Activated CD4-positive, alpha-beta T cell treated with anti-CD3 and anti-CD28 coated beads, Interleukin-2, amount 10 ng/mL, durations not matched to agents 24 days and 14 days (primary cell): ENCODE measurements at regions of chr9 and their contacts with region 1.

Region 1: GRCh38 chr9:128296337-128297220 is 20.5 kb downstream of the SWI5 start:
- DNase-seq: no peak
- H3K4me3 Mint-ChIP-seq: no peak overlapping the region
- H3K27ac Mint-ChIP-seq: no peak overlapping the region
- H3K4me1 Mint-ChIP-seq: no peaks in the 10 kb centered on the region
- H3K27me3 Mint-ChIP-seq: no peaks in the 10 kb centered on the region

Region 2: GRCh38 chr9:128361986-128362646 is 65.5 kb after region 1 on chr9:
- intact Hi-C with region 1: loop called (anchors 1 kb)
- DNase-seq: peak; percentile 91
- H3K4me3 Mint-ChIP-seq: peak overlapping the region; percentile 85
- H3K27ac Mint-ChIP-seq: peak overlapping the region; percentile 79
- H3K4me1 Mint-ChIP-seq: peaks cover 16% of the 10 kb centered on the region
- H3K27me3 Mint-ChIP-seq: no peaks in the 10 kb centered on the region